Panc1 (cell line): ENCODE measurements at regions of chr6 and their contacts with region 1.

Region 1: GRCh38 chr6:35736253-35736894 is 458 bp upstream of the ARMC12 start:
- DNase-seq: no peak
- ATAC-seq: peak; percentile 54
- H3K4me3 ChIP-seq: no peak overlapping the region
- H3K27ac ChIP-seq: no peak overlapping the region
- H3K4me1 ChIP-seq: peaks cover 5% of the 10 kb centered on the region; the same call in 1 of the 2 replicates
- H3K27me3 ChIP-seq: no peaks in the 10 kb centered on the region
- CTCF ChIP-seq: peak; percentile 94

Region 2: DNA sequence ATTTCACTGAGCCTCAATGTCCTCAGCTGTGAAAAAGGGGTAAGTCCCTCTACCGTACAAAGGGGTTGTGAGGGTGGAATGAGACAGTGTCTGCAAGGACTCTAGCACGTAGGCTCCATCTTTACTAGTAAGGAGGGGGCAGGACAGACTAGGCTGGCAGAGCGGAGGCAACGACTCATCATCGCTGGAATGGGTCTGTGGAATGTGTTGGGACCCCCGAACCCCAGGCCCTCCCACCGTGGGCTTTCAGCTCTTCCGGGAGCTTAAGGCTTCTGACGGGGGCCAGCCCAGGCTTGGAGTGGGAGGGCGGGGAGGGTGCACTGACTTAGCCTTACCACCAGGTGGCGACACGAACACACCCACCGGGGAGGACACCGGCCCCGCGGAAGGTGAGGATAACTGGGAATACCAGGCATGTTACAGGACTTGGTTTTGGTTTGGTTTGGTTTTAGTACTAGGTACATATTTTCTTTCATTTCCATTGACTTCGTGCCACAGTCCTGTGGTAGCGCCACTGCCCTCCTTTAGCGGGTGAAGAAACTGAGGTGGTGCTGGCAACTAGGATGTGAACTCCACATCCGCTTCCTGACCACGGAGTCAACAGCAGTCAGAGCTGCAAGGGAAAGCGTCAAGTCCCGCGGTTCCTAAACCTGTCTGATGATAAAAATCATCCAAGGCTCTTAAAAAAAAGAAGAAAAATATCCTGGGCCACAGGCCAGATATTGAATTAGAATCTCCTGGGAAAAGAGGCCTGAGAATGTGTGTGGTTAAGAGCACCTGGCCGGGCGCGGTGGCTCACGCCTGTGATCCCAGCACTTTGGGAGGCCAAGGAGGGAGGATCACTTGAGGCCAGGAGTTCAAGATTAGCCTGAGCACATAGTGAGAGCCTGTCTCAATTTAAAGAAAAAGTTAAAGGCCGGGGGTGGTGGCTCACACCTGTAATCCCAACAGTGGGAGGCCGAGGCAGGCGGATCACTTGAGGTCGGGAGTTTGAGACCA is 213.4 kb before region 1 on chr6:
- CTCF ChIA-PET with region 1: interaction called, 9 read pairs
- POLR2A ChIA-PET with region 1: no interaction called
- in situ Hi-C with region 1: no loop called
- intact Hi-C with region 1: loop called (anchors 2 kb)
- DNase-seq: peak; percentile 51
- ATAC-seq: peak; percentile 95
- H3K4me3 ChIP-seq: peak overlapping the region in 1 of 2 experiments; percentile 20; a peak in 1 of 4 replicates
- H3K27ac ChIP-seq: no peak overlapping the region
- H3K4me1 ChIP-seq: no peaks in the 10 kb centered on the region
- H3K27me3 ChIP-seq: no peaks in the 10 kb centered on the region
- CTCF ChIP-seq: peak; percentile 97

Region 3: DNA sequence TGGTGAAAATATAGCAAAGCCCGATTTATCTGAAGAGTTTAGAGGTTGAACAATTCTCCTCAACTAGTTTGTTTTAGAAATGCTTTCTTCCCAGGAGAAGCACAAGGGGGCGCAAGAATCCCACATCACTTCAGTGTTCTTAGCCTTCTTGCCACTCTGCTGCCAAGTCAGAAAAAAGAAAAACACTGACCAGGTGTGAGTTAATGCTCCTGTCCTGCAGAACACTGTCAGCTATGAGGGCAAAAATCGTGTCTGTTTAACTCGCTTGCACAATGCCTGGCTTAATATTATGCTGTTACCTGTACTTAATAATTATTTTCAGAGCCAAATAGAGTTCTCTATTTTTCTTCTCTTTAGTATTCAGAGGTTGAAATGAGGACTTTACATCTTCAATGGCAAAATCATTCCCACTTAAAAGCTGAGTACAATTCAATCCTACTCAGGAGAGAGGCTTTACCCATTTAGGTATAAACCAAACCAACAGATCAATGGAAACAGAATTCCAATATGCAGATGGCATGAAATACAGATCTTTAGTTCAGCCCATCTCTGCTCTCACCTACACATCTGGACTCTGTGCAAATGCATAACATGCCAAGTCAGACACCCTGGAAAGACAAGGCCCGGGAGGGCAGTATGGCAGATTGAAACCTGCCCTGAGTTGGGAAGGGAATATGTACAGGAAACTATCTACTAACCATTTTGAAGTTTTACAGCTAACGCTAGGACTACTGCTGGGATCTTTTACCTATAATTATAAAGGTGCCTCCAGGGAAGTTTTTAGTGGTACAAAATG is 152.3 kb before region 1 on chr6:
- CTCF ChIA-PET with region 1: interaction called, 6 read pairs
- POLR2A ChIA-PET with region 1: no interaction called
- in situ Hi-C with region 1: no loop called
- intact Hi-C with region 1: loop called (anchors 1 kb)
- DNase-seq: peak; percentile 67
- ATAC-seq: peak; percentile 87
- H3K4me3 ChIP-seq: no peak overlapping the region
- H3K27ac ChIP-seq: no peak overlapping the region
- H3K4me1 ChIP-seq: no peaks in the 10 kb centered on the region
- H3K27me3 ChIP-seq: no peaks in the 10 kb centered on the region
- CTCF ChIP-seq: peak; percentile 87

Region 4: DNA sequence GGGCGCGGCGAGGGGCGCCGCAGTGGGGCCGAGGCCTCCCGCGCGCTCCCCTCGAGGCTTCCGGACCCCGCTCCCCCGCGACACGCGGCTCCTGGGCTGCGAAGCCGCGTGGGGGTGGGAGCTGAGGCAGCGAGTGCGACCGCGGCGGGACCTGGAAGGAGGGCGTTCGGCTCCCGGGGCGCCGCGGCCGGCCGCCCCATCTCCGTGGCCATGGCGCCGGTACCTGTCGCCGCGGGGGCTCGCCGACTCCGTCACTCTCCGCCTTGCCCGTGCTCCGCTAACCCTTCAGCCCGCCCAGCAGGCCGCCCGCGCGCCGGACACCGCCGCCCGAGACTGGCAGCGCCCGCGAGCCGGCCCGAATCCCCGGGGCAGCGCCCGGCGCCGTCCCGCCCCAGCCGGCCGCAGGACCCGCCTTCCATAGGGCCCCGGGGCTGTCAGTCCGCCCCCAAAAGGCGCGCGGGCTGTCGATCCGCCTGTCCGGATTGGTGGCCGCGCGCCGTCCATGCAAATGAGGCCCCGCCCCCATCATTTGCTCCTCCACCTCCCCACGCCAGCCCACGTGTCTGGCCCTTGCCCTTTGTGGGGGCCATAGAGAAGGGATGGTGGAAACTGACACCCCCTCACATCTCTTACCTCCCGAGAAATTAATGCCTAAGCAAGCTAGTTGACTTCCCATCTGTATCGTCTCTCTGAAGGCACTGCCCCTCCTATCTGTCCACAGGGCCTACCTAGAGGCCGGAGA is 47.6 kb before region 1 on chr6 and contains the start of gene FKBP5:
- CTCF ChIA-PET with region 1: interaction called, 9 read pairs
- POLR2A ChIA-PET with region 1: interaction called, 7 read pairs
- in situ Hi-C with region 1: no loop called
- intact Hi-C with region 1: loop called (anchors 5 kb)
- DNase-seq: peak; percentile 27
- ATAC-seq: peak; percentile 98
- H3K4me3 ChIP-seq: peak within 1 kb of the TSS; percentile 72 to 86
- H3K27ac ChIP-seq: peak within 1 kb of the TSS; percentile 76
- H3K4me1 ChIP-seq: peaks cover 13% of the 10 kb centered on the region; the same call in 1 of the 2 replicates
- H3K27me3 ChIP-seq: no peaks in the 10 kb centered on the region
- CTCF ChIP-seq: no peak
- total RNA-seq, gene FKBP5: 25.2 TPM

Region 5: GRCh38 chr6:35751594-35751993 is 15.2 kb after region 1 on chr6:
- CTCF ChIA-PET with region 1: no interaction called
- POLR2A ChIA-PET with region 1: no interaction called
- in situ Hi-C with region 1: no loop called
- intact Hi-C with region 1: no loop called
- DNase-seq: no peak
- ATAC-seq: no peak
- H3K4me3 ChIP-seq: no peak overlapping the region
- H3K27ac ChIP-seq: no peak overlapping the region
- H3K4me1 ChIP-seq: no peaks in the 10 kb centered on the region
- H3K27me3 ChIP-seq: 0 out of 2 replicates have a peak, but pooled peaks cover 2% of the 10 kb centered on the region
- CTCF ChIP-seq: no peak